ENCODE measurements at regions of chr12 and their contacts with region 1.

Region 1: GRCh38 chr12:3004655-3005565 is 45.7 kb downstream of the TEAD4 start:
- DNase-seq: no peak
- H3K4me3 ChIP-seq: no peak overlapping the region
- H3K27ac ChIP-seq: no peak overlapping the region
- H3K4me1 ChIP-seq: peaks cover 1% of the 10 kb centered on the region
- H3K27me3 ChIP-seq: no peaks in the 10 kb centered on the region
- CTCF ChIP-seq: no peak
- EP300 ChIP-seq: no peak
- POLR2A ChIP-seq: no peak

Region 2: DNA sequence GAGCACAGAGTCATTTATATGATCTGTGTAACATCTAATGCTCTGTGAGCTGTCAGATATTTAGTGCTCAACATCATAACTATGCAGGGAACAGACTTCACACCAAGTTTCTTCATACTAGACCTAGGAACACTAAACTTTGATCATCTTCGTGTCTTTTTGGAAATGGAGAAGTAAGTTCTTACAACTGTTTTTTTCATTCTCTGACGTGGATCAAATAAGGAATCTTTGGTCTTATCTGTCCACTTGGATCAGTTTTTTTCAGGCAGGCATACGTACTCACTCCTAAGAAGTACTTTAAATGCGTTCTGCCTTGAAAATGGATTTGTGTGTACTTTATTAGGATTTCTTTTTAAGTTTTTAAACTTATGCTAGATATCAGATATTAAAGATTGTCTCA is 1601.5 kb before region 1 on chr12:
- intact Hi-C with region 1: loop called in 1 of 4 experiments (anchors 10 kb)
- DNase-seq: no peak
- H3K4me3 ChIP-seq: no peak overlapping the region
- H3K27ac ChIP-seq: no peak overlapping the region
- H3K4me1 ChIP-seq: no peaks in the 10 kb centered on the region
- H3K27me3 ChIP-seq: no peaks in the 10 kb centered on the region
- CTCF ChIP-seq: no peak
- EP300 ChIP-seq: no peak
- POLR2A ChIP-seq: no peak

Region 3: GRCh38 chr12:3046446-3047200 is 41.7 kb after region 1 on chr12:
- intact Hi-C with region 1: no loop called
- DNase-seq: no peak
- H3K4me3 ChIP-seq: no peak overlapping the region
- H3K27ac ChIP-seq: no peak overlapping the region
- H3K4me1 ChIP-seq: no peaks in the 10 kb centered on the region
- H3K27me3 ChIP-seq: no peaks in the 10 kb centered on the region
- CTCF ChIP-seq: no peak
- EP300 ChIP-seq: no peak
- POLR2A ChIP-seq: no peak